CD8-positive, alpha-beta T cell (primary cell): ENCODE measurements at regions of chr12 and their contacts with region 1.

Region 1: GRCh38 chr12:76083904-76084862 is at the start of gene NAP1L1:
- DNase-seq: peak; percentile 92 to 98 (median 97)
- ATAC-seq: peak; percentile 83
- H3K4me3 ChIP-seq: peak within 1 kb of the TSS; percentile 69 to 81
- H3K4me3 Mint-ChIP-seq: peak within 1 kb of the TSS; percentile 99
- H3K27ac ChIP-seq: peak within 1 kb of the TSS; percentile 98 to 99
- H3K27ac Mint-ChIP-seq: peak within 1 kb of the TSS; percentile 100
- H3K4me1 ChIP-seq: peaks cover 34% of the 10 kb centered on the region
- H3K4me1 Mint-ChIP-seq: peaks cover 53% of the 10 kb centered on the region
- H3K27me3 ChIP-seq: no peaks in the 10 kb centered on the region
- H3K27me3 Mint-ChIP-seq: no peaks in the 10 kb centered on the region
- CTCF ChIP-seq: no peak
- total RNA-seq, gene NAP1L1: 581 to 618 TPM

Region 2: DNA sequence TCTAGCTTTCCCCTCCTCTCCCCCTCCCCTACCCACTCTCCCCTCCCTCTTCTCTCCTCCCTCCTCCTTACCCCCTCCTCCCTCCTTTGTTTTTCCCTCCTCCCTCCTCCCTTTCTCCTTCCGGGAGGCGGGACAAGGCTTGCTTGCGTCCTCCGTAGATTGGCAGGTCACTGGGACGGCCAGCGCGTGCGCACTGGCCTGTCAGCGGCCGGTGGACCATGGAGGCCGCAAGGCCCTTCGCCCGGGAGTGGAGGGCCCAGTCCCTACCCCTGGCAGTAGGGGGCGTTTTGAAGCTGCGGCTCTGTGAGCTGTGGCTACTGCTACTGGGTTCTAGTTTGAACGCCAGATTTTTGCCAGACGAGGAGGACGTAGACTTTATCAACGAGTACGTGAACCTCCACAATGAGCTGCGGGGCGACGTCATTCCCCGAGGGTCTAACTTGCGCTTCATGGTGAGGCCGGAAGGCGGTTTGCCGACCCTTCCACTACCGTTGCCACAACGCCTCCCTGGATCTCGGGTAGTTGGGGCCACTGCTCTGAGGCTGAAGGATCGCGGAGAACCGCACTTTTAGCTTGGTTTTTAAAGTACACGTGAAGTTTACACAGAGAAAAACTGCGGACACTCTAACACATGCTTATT is 693.2 kb before region 1 on chr12 and contains the start of gene GLIPR1L2:
- CTCF ChIA-PET with region 1: no interaction called
- POLR2A ChIA-PET with region 1: no interaction called
- intact Hi-C with region 1: loop called in 1 of 2 experiments (anchors 1 kb)
- DNase-seq: peak; percentile 77 to 96 (median 85)
- ATAC-seq: peak; percentile 88
- H3K4me3 ChIP-seq: peak within 1 kb of the TSS; percentile 70 to 72
- H3K4me3 Mint-ChIP-seq: peak within 1 kb of the TSS; percentile 91
- H3K27ac ChIP-seq: peak within 1 kb of the TSS; percentile 70 to 90
- H3K27ac Mint-ChIP-seq: peak within 1 kb of the TSS; percentile 95
- H3K4me1 ChIP-seq: peaks cover 26% of the 10 kb centered on the region
- H3K4me1 Mint-ChIP-seq: peaks cover 46% of the 10 kb centered on the region
- H3K27me3 ChIP-seq: no peaks in the 10 kb centered on the region
- H3K27me3 Mint-ChIP-seq: no peaks in the 10 kb centered on the region
- CTCF ChIP-seq: peak; percentile 53
- total RNA-seq, gene GLIPR1L2: not detected

Region 3: GRCh38 chr12:75977952-75978671 is 106.1 kb before region 1 on chr12:
- CTCF ChIA-PET with region 1: no interaction called
- POLR2A ChIA-PET with region 1: no interaction called
- intact Hi-C with region 1: loop called in 1 of 2 experiments (anchors 2 kb)
- DNase-seq: peak; percentile 27 to 92 (median 75)
- ATAC-seq: peak; percentile 90
- H3K4me3 ChIP-seq: no peak overlapping the region
- H3K4me3 Mint-ChIP-seq: no peak overlapping the region
- H3K27ac ChIP-seq: peak overlapping the region in 1 of 2 experiments; percentile 63
- H3K27ac Mint-ChIP-seq: peak overlapping the region; percentile 71
- H3K4me1 ChIP-seq: peaks cover 23% of the 10 kb centered on the region
- H3K4me1 Mint-ChIP-seq: peaks cover 31% of the 10 kb centered on the region
- H3K27me3 ChIP-seq: no peaks in the 10 kb centered on the region
- H3K27me3 Mint-ChIP-seq: no peaks in the 10 kb centered on the region
- CTCF ChIP-seq: no peak

Region 4: DNA sequence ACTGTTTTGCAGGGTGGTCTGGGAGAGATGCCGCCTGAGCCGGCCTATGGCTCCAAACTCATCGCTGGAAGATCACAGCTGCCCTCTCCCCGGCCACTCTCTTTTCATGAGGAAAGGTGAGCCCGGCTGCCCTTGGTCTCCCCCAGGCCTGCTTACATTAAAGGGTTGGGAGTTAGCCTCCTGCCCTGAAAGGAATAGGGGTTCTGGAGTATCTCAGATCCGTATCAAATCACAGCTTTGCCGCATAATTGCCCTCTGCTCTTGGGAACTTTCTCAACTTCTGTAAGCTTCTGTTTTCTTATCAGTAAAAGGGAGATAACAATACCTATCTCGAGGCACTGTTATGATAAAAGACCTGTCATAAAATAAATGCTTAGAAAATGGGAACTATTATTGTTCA is 70.2 kb before region 1 on chr12:
- CTCF ChIA-PET with region 1: no interaction called
- POLR2A ChIA-PET with region 1: no interaction called
- intact Hi-C with region 1: no loop called
- DNase-seq: no peak
- ATAC-seq: no peak
- H3K4me3 ChIP-seq: no peak overlapping the region
- H3K4me3 Mint-ChIP-seq: no peak overlapping the region
- H3K27ac ChIP-seq: no peak overlapping the region
- H3K27ac Mint-ChIP-seq: no peak overlapping the region
- H3K4me1 ChIP-seq: no peaks in the 10 kb centered on the region
- H3K4me1 Mint-ChIP-seq: peaks cover 4% of the 10 kb centered on the region
- H3K27me3 ChIP-seq: no peaks in the 10 kb centered on the region
- H3K27me3 Mint-ChIP-seq: no peaks in the 10 kb centered on the region
- CTCF ChIP-seq: no peak

Region 5: GRCh38 chr12:76158518-76159321 is 74.5 kb after region 1 on chr12:
- CTCF ChIA-PET with region 1: no interaction called
- POLR2A ChIA-PET with region 1: no interaction called
- intact Hi-C with region 1: loop called in 1 of 2 experiments (anchors 2 kb)
- DNase-seq: peak; percentile 3 to 73 (median 43)
- ATAC-seq: peak; percentile 95
- H3K4me3 ChIP-seq: peak overlapping the region in 1 of 2 experiments; percentile 20
- H3K4me3 Mint-ChIP-seq: peak overlapping the region; percentile 68
- H3K27ac ChIP-seq: no peak overlapping the region
- H3K27ac Mint-ChIP-seq: peak overlapping the region; percentile 58
- H3K4me1 ChIP-seq: peaks cover 4% of the 10 kb centered on the region
- H3K4me1 Mint-ChIP-seq: peaks cover 9% of the 10 kb centered on the region
- H3K27me3 ChIP-seq: no peaks in the 10 kb centered on the region
- H3K27me3 Mint-ChIP-seq: no peaks in the 10 kb centered on the region
- CTCF ChIP-seq: peak; percentile 48

Region 6: GRCh38 chr12:76190299-76190698 is 106.1 kb after region 1 on chr12:
- CTCF ChIA-PET with region 1: no interaction called
- POLR2A ChIA-PET with region 1: no interaction called
- intact Hi-C with region 1: no loop called
- DNase-seq: no peak
- ATAC-seq: no peak
- H3K4me3 ChIP-seq: no peak overlapping the region
- H3K4me3 Mint-ChIP-seq: no peak overlapping the region
- H3K27ac ChIP-seq: no peak overlapping the region
- H3K27ac Mint-ChIP-seq: no peak overlapping the region
- H3K4me1 ChIP-seq: no peaks in the 10 kb centered on the region
- H3K4me1 Mint-ChIP-seq: no peaks in the 10 kb centered on the region
- H3K27me3 ChIP-seq: no peaks in the 10 kb centered on the region
- H3K27me3 Mint-ChIP-seq: peaks cover 12% of the 10 kb centered on the region
- CTCF ChIP-seq: no peak

Region 7: DNA sequence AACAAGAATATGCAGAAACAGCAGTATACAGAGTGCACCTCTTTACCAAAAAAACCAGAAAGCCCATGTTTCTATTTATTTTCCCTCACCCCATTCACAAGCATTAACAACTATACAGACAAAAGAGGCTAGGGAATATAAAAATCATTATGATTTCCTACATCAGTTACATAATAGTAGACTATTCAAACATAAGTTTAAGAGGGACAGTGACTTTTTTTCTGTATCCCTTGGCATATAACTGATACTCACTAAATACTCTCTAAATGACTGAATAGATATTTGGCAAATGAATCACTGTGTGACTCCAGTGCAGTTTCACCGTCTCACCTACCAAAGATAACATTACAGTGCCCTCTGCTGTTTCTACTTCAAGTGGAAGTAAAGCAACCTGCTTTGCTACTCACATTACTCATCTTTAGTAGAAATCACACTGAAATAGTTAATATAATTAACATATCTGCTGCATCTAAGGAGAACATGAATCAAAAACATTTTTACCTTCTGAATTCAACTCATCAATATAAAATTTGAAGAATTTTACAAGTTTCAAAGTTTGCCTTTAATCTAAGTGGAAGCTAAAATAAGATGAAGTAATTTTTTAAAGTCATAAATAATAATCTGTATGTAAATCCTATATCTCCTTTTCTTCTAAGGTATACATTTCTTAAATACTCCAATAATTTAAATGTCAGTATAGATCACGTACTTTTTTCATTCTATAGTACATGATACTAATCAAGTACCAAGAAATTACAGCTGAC is 371.6 kb after region 1 on chr12:
- CTCF ChIA-PET with region 1: interaction called, 4 read pairs
- POLR2A ChIA-PET with region 1: no interaction called
- intact Hi-C with region 1: loop called (anchors 5 kb)
- DNase-seq: peak in 3 of 9 experiments; percentile 16 to 62 (median 50)
- ATAC-seq: peak; percentile 40
- H3K4me3 ChIP-seq: no peak overlapping the region
- H3K4me3 Mint-ChIP-seq: no peak overlapping the region
- H3K27ac ChIP-seq: no peak overlapping the region
- H3K27ac Mint-ChIP-seq: no peak overlapping the region
- H3K4me1 ChIP-seq: peaks cover 5% of the 10 kb centered on the region
- H3K4me1 Mint-ChIP-seq: peaks cover 39% of the 10 kb centered on the region
- H3K27me3 ChIP-seq: no peaks in the 10 kb centered on the region
- H3K27me3 Mint-ChIP-seq: no peaks in the 10 kb centered on the region
- CTCF ChIP-seq: peak; percentile 57

Region 8: GRCh38 chr12:76763743-76764675 is 679.8 kb after region 1 on chr12 and contains the start of gene ZDHHC17:
- CTCF ChIA-PET with region 1: no interaction called
- POLR2A ChIA-PET with region 1: interaction called, 3 read pairs
- intact Hi-C with region 1: loop called in 1 of 2 experiments (anchors 2 kb)
- DNase-seq: peak; percentile 89 to 96 (median 93)
- ATAC-seq: peak; percentile 82
- H3K4me3 ChIP-seq: peak within 1 kb of the TSS; percentile 73 to 99
- H3K4me3 Mint-ChIP-seq: peak within 1 kb of the TSS; percentile 98
- H3K27ac ChIP-seq: peak within 1 kb of the TSS; percentile 87 to 94
- H3K27ac Mint-ChIP-seq: peak within 1 kb of the TSS; percentile 99
- H3K4me1 ChIP-seq: peaks cover 26% of the 10 kb centered on the region
- H3K4me1 Mint-ChIP-seq: peaks cover 47% of the 10 kb centered on the region
- H3K27me3 ChIP-seq: no peaks in the 10 kb centered on the region
- H3K27me3 Mint-ChIP-seq: no peaks in the 10 kb centered on the region
- CTCF ChIP-seq: no peak
- total RNA-seq, gene ZDHHC17: 38.1 to 40.3 TPM